ENCODE measurements at regions of chr4 and their contacts with region 1.

Region 1: GRCh38 chr4:19958848-19959247 is 292.9 kb upstream of the SLIT2 start:
- DNase-seq: no peak
- H3K4me3 ChIP-seq: no peak overlapping the region
- H3K27ac ChIP-seq: no peak overlapping the region
- H3K4me1 ChIP-seq: no peaks in the 10 kb centered on the region
- H3K27me3 ChIP-seq: no peaks in the 10 kb centered on the region
- CTCF ChIP-seq: no peak

Region 2: GRCh38 chr4:19823781-19824180 is 135.1 kb before region 1 on chr4:
- intact Hi-C with region 1: no loop called
- DNase-seq: no peak
- H3K4me3 ChIP-seq: no peak overlapping the region
- H3K27ac ChIP-seq: no peak overlapping the region
- H3K4me1 ChIP-seq: no peaks in the 10 kb centered on the region
- H3K27me3 ChIP-seq: no peaks in the 10 kb centered on the region
- CTCF ChIP-seq: no peak

Region 3: GRCh38 chr4:19987746-19988145 is 28.9 kb after region 1 on chr4:
- intact Hi-C with region 1: loop called (anchors 1 kb)
- DNase-seq: no peak
- H3K4me3 ChIP-seq: no peak overlapping the region
- H3K27ac ChIP-seq: no peak overlapping the region
- H3K4me1 ChIP-seq: no peaks in the 10 kb centered on the region
- H3K27me3 ChIP-seq: no peaks in the 10 kb centered on the region
- CTCF ChIP-seq: no peak

Measured in tibial artery (tissue), 4 donors.